ENCODE measurements at regions of chr2 and their contacts with region 1.

Region 1: DNA sequence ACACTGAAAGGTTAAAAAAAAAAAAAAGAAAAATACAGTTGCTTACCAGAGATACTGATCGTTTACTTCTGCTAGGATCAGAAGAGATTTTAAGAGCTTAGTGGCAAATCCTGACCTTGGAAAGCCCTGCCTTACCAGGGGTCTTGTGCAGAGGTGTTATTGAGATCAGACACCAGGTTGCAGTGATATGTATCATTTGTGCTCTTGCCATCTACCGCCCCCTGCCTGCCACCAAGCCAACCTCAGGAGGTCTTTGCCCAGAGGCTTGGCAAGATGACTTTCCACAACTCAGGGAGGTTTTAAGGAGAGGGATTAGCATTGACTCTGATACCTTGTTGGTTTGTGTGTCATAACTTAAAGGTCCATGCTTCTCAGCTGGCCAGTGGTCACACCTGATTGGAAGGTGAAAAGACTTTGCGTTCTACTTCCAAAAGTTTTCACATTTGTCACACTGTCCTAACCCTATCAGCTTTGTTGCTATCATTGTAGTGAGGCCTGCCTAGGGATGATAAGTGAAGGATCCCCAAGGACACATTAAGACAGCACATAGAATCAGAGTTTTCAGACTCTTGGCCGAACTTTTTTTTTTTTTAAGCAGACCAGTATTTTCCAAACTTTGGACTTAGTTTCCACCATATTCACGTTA is 46.2 kb upstream of the MGAT5 start:
- DNase-seq: peak; percentile 68
- ATAC-seq: peak; percentile 90
- H3K4me3 Mint-ChIP-seq: no peak overlapping the region
- H3K27ac Mint-ChIP-seq: no peak overlapping the region
- H3K4me1 Mint-ChIP-seq: peaks cover 10% of the 10 kb centered on the region
- H3K27me3 Mint-ChIP-seq: no peaks in the 10 kb centered on the region

Region 2: DNA sequence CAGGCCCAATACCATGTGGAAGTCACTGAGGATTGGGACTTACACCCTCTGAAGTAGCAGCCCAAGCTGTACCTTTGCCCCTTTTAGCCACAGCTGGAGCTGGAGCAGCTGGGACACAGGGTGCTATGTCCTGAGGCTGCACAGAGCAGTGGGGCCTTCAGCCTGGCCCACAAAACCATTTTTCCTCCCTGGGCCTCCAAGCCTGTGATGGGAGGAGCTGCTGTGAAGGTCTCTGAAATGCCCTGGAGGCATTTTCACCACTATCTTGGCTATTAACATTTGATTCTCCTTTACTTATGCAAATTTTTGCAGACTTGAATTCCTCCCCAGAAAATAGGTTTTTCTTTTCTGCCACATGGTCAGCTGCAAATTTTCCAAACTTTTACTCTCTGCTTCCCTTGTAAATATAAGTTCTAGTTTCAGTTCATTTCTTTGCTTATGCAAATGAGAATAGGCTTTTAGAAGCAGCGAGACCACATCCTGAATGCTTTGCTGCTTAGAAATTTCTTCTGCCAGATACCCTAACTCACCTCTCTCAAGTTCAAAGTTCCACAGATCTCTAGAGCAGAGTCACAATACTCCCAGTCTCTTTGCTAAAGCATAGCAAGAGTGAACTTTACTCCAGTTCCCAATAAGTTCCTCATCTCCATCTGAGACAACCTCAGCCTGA is 167.6 kb before region 1 on chr2:
- CTCF ChIA-PET with region 1: no interaction called
- POLR2A ChIA-PET with region 1: no interaction called
- DNase-seq: no peak
- ATAC-seq: no peak
- H3K4me3 Mint-ChIP-seq: no peak overlapping the region
- H3K27ac Mint-ChIP-seq: peak overlapping the region; percentile 20
- H3K4me1 Mint-ChIP-seq: peaks cover 10% of the 10 kb centered on the region
- H3K27me3 Mint-ChIP-seq: peaks cover 11% of the 10 kb centered on the region

Region 3: DNA sequence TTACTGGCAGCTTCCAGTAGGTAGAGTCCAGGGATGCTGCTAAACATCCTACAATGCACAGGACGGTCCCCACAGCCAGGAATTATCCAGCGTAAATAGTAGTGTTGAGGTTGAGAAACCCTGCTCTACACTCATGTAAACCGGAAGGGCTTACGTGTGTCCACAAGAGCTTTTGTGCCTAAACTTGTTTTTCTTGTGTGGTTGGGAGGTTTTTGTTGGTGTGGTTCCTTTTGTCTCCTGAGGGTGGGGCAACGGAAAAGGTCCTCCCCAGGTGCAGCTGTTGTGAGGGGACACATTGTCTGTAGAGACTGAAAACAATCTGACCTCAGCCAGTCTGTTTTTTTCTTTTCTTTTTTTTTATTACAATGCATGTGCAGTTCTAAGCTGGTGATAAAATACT is 26.5 kb before region 1 on chr2:
- CTCF ChIA-PET with region 1: interaction called, 15 read pairs
- POLR2A ChIA-PET with region 1: no interaction called
- DNase-seq: peak; percentile 71
- ATAC-seq: peak; percentile 88
- H3K4me3 Mint-ChIP-seq: no peak overlapping the region
- H3K27ac Mint-ChIP-seq: peak overlapping the region; percentile 70
- H3K4me1 Mint-ChIP-seq: peaks cover 47% of the 10 kb centered on the region
- H3K27me3 Mint-ChIP-seq: no peaks in the 10 kb centered on the region